Breast epithelium (tissue), 4 donors: ENCODE measurements at regions of chr6 and their contacts with region 1.

Region 1: DNA sequence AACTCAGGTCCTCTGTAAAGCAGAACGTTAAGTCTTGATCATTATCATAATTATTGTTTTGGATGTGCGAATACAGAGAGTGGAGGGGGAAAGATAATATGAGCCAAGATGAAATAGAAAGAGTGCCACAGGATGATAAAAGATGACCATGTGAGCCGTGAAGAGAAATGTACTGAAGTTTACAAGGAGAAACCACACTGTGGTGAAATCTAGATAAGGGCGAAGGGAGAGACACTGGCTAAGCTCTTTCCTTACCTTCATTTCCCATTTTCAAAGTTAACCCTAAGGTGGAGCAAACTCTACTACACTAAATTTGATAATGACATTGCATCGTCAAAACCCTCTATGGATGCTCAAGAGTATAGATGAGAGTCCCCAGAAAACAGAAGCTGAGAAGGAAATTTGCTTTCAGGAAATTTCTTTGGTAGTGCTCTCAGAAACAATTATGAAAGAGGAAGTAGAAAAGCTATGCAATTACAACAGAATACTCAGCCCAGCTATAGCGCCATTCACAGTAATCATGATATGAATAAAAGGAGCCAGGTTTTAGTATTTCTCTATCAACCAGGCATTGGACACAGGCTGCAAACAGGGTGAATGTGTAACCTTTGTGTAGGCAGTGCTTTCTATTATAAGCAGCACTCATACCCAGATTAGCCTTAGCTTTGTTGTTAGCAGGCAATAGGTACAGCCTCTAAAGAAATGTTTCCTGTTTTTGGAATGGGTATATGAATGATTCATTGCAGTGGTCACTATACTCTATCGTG is 1080.7 kb downstream of the GRIK2 start:
- DNase-seq: no peak
- H3K4me3 ChIP-seq: no peak overlapping the region
- H3K27ac ChIP-seq: no peak overlapping the region
- H3K4me1 ChIP-seq: no peaks in the 10 kb centered on the region
- H3K27me3 ChIP-seq: no peaks in the 10 kb centered on the region
- CTCF ChIP-seq: no peak
- POLR2A ChIP-seq: no peak

Region 2: GRCh38 chr6:102458990-102459389 is 15.2 kb before region 1 on chr6:
- intact Hi-C with region 1: no loop called
- DNase-seq: no peak
- H3K4me3 ChIP-seq: no peak overlapping the region
- H3K27ac ChIP-seq: no peak overlapping the region
- H3K4me1 ChIP-seq: no peaks in the 10 kb centered on the region
- H3K27me3 ChIP-seq: no peaks in the 10 kb centered on the region
- CTCF ChIP-seq: no peak
- POLR2A ChIP-seq: no peak

Region 3: DNA sequence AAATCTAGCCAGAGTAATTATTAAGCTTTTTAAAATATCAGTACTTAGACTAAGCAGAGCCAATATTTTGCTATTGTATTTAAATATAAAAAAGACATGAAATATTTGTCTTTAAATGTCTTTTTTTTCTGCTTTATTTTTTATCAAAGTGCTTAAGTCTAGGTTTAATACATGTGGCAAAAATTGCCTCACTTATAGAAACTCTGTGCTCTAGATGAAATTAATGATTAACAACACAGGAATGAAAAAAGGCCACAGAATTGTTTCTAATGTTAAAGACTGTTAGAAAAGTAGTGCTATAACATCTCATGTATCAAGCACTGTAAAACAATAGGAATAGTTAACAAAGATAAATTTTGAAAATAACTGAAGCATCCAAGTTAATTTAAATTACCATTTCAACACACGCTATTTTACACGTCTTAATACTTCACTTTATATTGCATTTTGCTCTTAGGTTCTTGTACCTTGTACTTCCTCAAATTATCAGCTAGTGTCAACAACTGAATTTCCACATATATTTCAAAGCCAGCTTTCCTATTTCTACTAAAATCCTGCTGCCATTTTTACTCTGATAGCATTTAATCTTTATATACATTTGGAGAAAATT is 870.4 kb after region 1 on chr6:
- intact Hi-C with region 1: loop called (anchors 5 kb)
- DNase-seq: no peak
- H3K4me3 ChIP-seq: no peak overlapping the region
- H3K27ac ChIP-seq: no peak overlapping the region
- H3K4me1 ChIP-seq: no peaks in the 10 kb centered on the region
- H3K27me3 ChIP-seq: no peaks in the 10 kb centered on the region
- CTCF ChIP-seq: no peak
- POLR2A ChIP-seq: no peak